Activated naive CD4-positive, alpha-beta T cell treated with anti-CD3 and anti-CD28 coated beads, Interleukin-2, amount 10 ng/mL, durations not matched to agents 7 days and 5 days (primary cell): ENCODE measurements at regions of chr10 and their contacts with region 1.

Region 1: GRCh38 chr10:88835096-88835909 is 16.3 kb downstream of the ANKRD22 start:
- DNase-seq: peak; percentile 92
- H3K4me3 Mint-ChIP-seq: no peak overlapping the region
- H3K27ac Mint-ChIP-seq: no peak overlapping the region
- H3K4me1 Mint-ChIP-seq: peaks cover 34% of the 10 kb centered on the region
- H3K27me3 Mint-ChIP-seq: no peaks in the 10 kb centered on the region

Region 2: GRCh38 chr10:87808112-87808511 is 1027.2 kb before region 1 on chr10:
- CTCF ChIA-PET with region 1: no interaction called
- DNase-seq: no peak
- H3K4me3 Mint-ChIP-seq: no peak overlapping the region
- H3K27ac Mint-ChIP-seq: no peak overlapping the region
- H3K4me1 Mint-ChIP-seq: peaks cover 7% of the 10 kb centered on the region
- H3K27me3 Mint-ChIP-seq: no peaks in the 10 kb centered on the region

Region 3: GRCh38 chr10:88728107-88728763 is 107.1 kb before region 1 on chr10:
- CTCF ChIA-PET with region 1: interaction called, 18 read pairs
- DNase-seq: peak; percentile 62
- H3K4me3 Mint-ChIP-seq: no peak overlapping the region
- H3K27ac Mint-ChIP-seq: no peak overlapping the region
- H3K4me1 Mint-ChIP-seq: peaks cover 3% of the 10 kb centered on the region
- H3K27me3 Mint-ChIP-seq: peaks cover 11% of the 10 kb centered on the region

Region 4: DNA sequence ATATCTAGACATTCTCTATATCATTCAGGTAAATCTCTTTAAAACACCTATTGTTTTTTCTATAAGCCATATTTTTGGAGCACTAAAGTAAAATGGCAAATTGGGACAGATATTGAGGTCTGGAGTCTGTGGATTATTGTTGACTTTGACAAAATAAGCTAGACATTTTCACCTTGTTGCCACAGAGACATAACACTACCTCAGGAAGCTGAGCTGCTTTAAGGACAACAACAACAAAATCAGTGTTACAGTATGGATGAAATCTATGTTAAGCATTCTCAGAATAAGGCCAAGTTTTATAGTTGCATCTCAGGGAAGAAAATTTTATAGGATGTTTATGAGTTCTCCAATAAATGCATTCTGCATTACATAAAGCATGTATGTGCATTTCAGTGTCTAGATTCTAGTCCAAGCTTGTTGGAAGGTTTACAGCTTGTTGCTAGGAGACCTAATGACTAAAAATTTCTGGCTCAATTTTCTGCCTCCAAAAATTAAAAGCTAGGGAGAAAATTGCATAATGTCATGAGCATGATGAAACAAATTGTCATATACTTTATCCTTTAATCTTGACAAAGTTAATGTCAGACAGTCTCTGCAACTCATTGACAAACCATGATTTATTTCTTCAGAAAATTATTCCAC is 14.4 kb before region 1 on chr10:
- CTCF ChIA-PET with region 1: interaction called, 12 read pairs
- DNase-seq: no peak
- H3K4me3 Mint-ChIP-seq: no peak overlapping the region
- H3K27ac Mint-ChIP-seq: no peak overlapping the region
- H3K4me1 Mint-ChIP-seq: peaks cover 39% of the 10 kb centered on the region
- H3K27me3 Mint-ChIP-seq: no peaks in the 10 kb centered on the region

Region 5: GRCh38 chr10:88865281-88865876 is 30.1 kb after region 1 on chr10:
- CTCF ChIA-PET with region 1: interaction called, 35 read pairs
- DNase-seq: no peak
- H3K4me3 Mint-ChIP-seq: no peak overlapping the region
- H3K27ac Mint-ChIP-seq: peak overlapping the region; percentile 39
- H3K4me1 Mint-ChIP-seq: no peaks in the 10 kb centered on the region
- H3K27me3 Mint-ChIP-seq: peaks cover 23% of the 10 kb centered on the region

Region 6: GRCh38 chr10:88886557-88886956 is 51.3 kb after region 1 on chr10:
- CTCF ChIA-PET with region 1: interaction called, 36 read pairs
- DNase-seq: no peak
- H3K4me3 Mint-ChIP-seq: no peak overlapping the region
- H3K27ac Mint-ChIP-seq: no peak overlapping the region
- H3K4me1 Mint-ChIP-seq: peaks cover 82% of the 10 kb centered on the region
- H3K27me3 Mint-ChIP-seq: no peaks in the 10 kb centered on the region

Region 7: GRCh38 chr10:88926566-88927415 is 91.5 kb after region 1 on chr10:
- CTCF ChIA-PET with region 1: interaction called, 275 read pairs
- DNase-seq: no peak
- H3K4me3 Mint-ChIP-seq: no peak overlapping the region
- H3K27ac Mint-ChIP-seq: no peak overlapping the region
- H3K4me1 Mint-ChIP-seq: peaks cover 3% of the 10 kb centered on the region
- H3K27me3 Mint-ChIP-seq: no peaks in the 10 kb centered on the region